ENCODE measurements at regions of chr20 and their contacts with region 1.

Region 1: DNA sequence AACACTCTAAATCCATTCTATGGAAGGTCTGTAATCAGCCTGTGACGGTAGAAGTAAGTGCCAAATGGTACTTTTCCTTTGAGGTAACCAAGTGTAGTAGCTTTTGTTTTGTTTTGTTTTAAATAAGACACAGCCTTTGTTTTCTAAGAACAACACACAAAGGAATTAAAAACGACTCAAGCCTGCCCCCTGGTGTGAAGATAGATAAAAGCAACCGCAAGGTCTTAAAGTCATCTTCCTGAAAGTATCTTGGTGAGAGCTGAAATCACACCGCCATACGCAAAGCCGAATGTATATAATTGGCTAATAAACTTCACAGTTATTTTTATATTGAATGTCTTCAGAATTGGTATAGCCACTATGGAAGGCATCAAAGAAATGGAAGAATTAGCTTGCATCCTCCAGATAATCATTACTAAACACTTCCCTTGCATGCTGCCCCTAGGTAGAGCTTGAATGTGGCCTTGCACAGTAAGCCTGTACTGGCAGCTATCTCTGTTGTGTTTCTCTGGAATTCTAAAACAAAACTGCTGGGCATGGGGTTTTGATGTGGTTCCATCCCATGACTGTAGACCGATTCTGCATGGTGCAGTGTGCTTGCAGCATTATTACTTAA is 95.6 kb downstream of the LAMP5 start:
- DNase-seq: no peak

Region 2: GRCh38 chr20:9407805-9408421 is 202.1 kb before region 1 on chr20:
- intact Hi-C with region 1: loop called (anchors 2 kb)
- DNase-seq: no peak

Region 3: GRCh38 chr20:9442858-9443257 is 167.1 kb before region 1 on chr20:
- intact Hi-C with region 1: no loop called
- DNase-seq: no peak

Region 4: DNA sequence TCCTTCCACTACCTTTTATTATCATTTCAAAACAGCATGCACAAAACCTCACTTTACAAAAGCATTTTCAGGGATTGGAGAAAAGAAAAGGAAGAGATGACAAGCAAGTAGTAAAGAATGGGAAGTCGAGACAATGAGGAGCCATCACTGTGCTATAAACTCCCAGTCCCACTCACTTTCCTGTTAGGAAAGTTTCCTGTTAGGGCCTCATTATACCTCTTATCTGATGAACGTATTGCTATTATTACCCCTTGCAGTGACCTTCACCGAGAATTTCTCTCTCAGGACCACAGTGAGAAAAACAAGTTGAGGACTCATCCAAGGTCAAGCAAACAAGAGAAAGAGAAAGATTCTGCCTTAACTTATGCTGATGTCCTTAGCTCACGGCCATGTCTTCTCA is 66.8 kb before region 1 on chr20:
- intact Hi-C with region 1: loop called (anchors 10 kb)
- DNase-seq: no peak

Region 5: GRCh38 chr20:9945408-9945807 is 335.4 kb after region 1 on chr20:
- intact Hi-C with region 1: no loop called
- DNase-seq: no peak